Activated T-helper 2 cell treated with anti-CD3 and anti-CD28 coated beads, Interferon-gamma antibody, Interleukin-2, Interleukin-4, amounts not matched to agents 10 μg/mL and 5 μg/mL and 100 μg/mL, durations not matched to agents 14 hours and 24 hours and 36 hours (primary cell): ENCODE measurements at regions of chr5 and their contacts with region 1.

Region 1: DNA sequence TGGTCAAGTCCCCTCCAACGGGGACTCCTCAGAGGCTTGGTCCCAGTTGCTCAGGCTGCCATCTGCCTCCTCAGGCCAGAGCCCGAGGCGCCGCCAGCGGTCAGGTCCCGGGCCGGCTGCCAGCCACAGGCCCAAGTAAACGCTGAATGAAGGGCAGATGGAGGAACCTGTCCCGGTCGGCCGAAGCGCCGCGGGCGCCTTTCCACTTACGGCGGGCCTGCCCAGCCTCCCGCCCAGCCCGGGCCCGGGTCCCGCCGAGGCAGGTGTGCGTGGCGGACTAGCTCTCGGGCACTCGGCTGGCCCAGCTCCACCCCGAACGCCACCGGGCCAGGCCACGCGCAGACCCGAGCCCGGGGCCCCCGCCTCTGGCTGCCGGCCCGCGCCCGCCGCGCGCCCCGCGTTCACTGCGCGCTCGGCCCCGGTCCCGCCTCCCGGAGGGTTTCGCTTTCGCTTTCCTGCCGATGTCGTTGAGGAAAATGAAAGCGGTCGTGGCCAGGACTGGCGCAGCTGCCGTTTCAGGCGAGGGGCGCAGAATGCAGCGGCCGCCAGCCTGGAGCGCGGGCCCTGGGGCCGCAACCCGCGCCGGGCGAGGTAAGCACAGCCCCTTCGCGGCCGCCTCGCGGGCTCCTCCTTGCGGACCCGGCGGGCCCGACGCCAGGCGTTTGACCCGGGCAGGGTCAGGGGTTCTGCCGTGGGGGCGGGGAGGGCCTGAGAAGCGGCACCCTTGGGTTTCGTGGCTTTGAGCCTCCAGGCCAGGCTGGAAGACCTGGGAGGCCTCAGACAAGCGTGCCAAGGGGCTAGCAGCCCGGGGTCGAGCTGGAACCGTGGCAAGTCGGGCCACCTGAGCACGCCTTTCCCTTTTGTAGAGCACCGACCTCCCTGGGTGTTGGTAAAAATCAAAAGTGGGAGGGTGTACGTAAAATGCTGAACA is 41.2 kb downstream of the SLC22A5 start:
- DNase-seq: peak; percentile 88
- H3K4me3 Mint-ChIP-seq: peak overlapping the region; percentile 98
- H3K27ac Mint-ChIP-seq: peak overlapping the region; percentile 99
- H3K4me1 Mint-ChIP-seq: peaks cover 54% of the 10 kb centered on the region
- H3K27me3 Mint-ChIP-seq: peaks cover under 1% of the 10 kb centered on the region

Region 2: GRCh38 chr5:132392978-132393825 is 17.5 kb before region 1 on chr5:
- intact Hi-C with region 1: loop called (anchors 2 kb)
- DNase-seq: no peak
- H3K4me3 Mint-ChIP-seq: no peak overlapping the region
- H3K27ac Mint-ChIP-seq: no peak overlapping the region
- H3K4me1 Mint-ChIP-seq: peaks cover 49% of the 10 kb centered on the region
- H3K27me3 Mint-ChIP-seq: no peaks in the 10 kb centered on the region

Region 3: DNA sequence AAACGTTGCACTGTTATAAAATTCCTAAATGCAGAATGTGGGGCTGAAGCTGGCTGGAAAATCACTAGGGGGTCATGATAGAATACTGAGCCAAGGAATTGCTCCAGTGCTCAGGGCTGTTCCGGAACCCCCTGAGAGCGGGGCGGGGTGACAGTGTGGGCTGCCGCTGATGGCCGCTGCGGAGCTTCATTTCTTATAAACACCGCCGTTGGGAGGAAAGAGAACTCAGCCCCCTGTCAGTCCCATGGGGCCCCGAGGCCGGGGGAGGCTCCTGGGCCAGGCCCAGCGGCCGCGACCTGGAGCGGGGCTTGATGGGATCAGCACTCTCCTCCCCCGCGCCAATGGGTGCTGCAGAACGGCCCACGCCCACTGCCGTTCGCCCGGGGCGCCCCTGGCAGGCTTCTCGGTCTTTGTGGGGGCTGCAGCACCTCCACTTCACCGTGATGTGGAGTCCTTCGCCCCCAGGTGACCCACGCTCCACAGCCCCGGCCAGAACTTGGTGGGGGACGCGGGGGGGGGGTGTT is 85.0 kb after region 1 on chr5:
- intact Hi-C with region 1: loop called (anchors 1 kb)
- DNase-seq: peak; percentile 74
- H3K4me3 Mint-ChIP-seq: peak overlapping the region; percentile 88
- H3K27ac Mint-ChIP-seq: peak overlapping the region; percentile 91
- H3K4me1 Mint-ChIP-seq: peaks cover 56% of the 10 kb centered on the region
- H3K27me3 Mint-ChIP-seq: no peaks in the 10 kb centered on the region

Region 4: DNA sequence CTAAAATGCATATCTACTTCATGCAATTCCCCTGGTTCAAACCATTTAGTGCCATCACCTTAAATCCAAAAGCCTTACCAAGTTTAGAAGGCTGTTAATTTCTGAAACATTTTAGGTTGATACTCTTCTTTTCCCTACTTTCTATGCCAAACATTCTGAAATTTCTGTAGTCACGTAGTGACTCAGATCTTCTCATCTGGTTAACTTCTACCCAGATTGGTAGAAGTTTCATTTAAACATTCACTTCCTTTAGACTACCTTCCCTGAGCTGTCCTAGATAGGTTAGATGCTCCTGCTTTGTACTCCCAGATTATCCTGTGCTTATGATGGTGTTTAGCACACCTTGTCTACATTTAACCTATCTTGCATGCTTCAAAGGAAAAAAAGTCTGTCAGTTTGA is 155.9 kb after region 1 on chr5:
- intact Hi-C with region 1: no loop called
- DNase-seq: no peak
- H3K4me3 Mint-ChIP-seq: peak overlapping the region; percentile 0
- H3K27ac Mint-ChIP-seq: peak overlapping the region; percentile 44
- H3K4me1 Mint-ChIP-seq: peaks cover 44% of the 10 kb centered on the region
- H3K27me3 Mint-ChIP-seq: no peaks in the 10 kb centered on the region